SK-N-SH (cell line): ENCODE measurements at regions of chr14 and their contacts with region 1.

Region 1: GRCh38 chr14:75982266-75983018 is 647 bp upstream of the TGFB3 start:
- DNase-seq: peak; percentile 90
- H3K4me3 ChIP-seq: peak overlapping the region; percentile 75 to 95
- H3K27ac ChIP-seq: peak overlapping the region; percentile 64 to 86
- H3K4me1 ChIP-seq: peaks cover 18 to 53% of the 10 kb centered on the region in 2 experiments
- H3K27me3 ChIP-seq: no peaks in the 10 kb centered on the region
- CTCF ChIP-seq: peak; percentile 57
- EP300 ChIP-seq: no peak
- RAD21 ChIP-seq: peak; percentile 81

Region 2: DNA sequence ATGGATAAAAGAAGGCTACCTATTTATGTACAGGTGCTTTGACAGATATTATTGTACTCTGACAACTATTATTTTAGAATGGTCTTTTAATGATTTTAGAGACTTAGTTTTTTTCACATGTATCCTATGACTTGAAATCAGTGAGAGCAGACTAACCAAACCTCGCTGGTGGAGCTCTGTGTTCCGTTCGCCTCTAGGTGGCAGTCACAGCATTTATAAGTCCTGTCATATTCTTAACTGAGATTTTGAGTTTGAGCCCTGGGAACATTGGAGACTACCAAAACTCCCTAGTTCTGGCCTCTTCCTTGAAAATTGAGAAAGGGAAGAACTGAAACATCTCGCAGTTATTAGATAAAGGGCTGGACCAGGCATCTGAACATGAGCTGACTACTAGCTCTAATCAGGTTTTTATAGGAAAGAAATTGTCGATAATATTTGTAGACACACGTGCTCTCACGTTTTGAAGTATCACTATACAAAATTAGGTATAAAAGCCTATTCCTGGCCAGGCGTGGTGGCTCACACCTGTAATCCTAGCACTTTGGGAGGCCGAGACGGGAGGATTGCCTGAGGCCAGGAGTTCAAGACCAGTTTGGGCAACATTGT is 273.1 kb before region 1 on chr14:
- CTCF ChIA-PET with region 1: interaction called, 270 read pairs
- POLR2A ChIA-PET with region 1: interaction called, 5 read pairs
- DNase-seq: peak; percentile 52
- H3K4me3 ChIP-seq: no peak overlapping the region; a peak in 1 of 4 replicates
- H3K27ac ChIP-seq: no peak overlapping the region
- H3K4me1 ChIP-seq: peaks cover 6 to 11% of the 10 kb centered on the region in 2 experiments; a peak in 3 of 4 replicates
- H3K27me3 ChIP-seq: no peaks in the 10 kb centered on the region
- CTCF ChIP-seq: peak; percentile 90
- EP300 ChIP-seq: no peak
- RAD21 ChIP-seq: peak; percentile 85

Region 3: GRCh38 chr14:75794615-75795038 is 187.8 kb before region 1 on chr14:
- CTCF ChIA-PET with region 1: interaction called, 16 read pairs
- POLR2A ChIA-PET with region 1: no interaction called
- DNase-seq: peak; percentile 7
- H3K4me3 ChIP-seq: no peak overlapping the region; a peak in 1 of 4 replicates
- H3K27ac ChIP-seq: peak overlapping the region in 1 of 2 experiments; percentile 30; a peak in 2 of 4 replicates
- H3K4me1 ChIP-seq: no peaks in the 10 kb centered on the region; a peak in 1 of 4 replicates
- H3K27me3 ChIP-seq: no peaks in the 10 kb centered on the region
- CTCF ChIP-seq: peak; percentile 64
- EP300 ChIP-seq: no peak
- RAD21 ChIP-seq: peak; percentile 70

Region 4: DNA sequence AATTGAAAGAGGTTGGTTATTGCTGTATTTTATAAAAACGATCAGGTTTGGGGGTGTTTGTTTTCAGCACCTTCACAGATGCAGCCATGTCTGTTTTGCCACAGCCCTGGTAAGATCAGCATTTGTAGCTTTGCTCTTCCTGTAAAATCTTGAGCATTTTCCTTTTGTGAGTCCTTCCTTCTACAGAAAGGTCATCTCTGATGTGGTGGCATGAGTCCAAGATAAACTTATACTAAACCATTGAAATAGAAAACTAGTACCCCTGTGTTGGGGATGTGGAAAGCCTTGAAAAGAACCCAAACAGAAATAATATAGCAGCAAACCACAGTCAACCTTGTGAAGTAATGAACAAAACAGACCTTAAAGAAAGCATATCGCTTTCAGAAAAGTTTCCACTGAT is 86.1 kb before region 1 on chr14:
- CTCF ChIA-PET with region 1: interaction called, 550 read pairs
- POLR2A ChIA-PET with region 1: no interaction called
- DNase-seq: no peak
- H3K4me3 ChIP-seq: no peak overlapping the region
- H3K27ac ChIP-seq: no peak overlapping the region; a peak in 1 of 4 replicates
- H3K4me1 ChIP-seq: no peaks in the 10 kb centered on the region
- H3K27me3 ChIP-seq: no peaks in the 10 kb centered on the region
- CTCF ChIP-seq: no peak
- EP300 ChIP-seq: no peak
- RAD21 ChIP-seq: no peak

Region 5: DNA sequence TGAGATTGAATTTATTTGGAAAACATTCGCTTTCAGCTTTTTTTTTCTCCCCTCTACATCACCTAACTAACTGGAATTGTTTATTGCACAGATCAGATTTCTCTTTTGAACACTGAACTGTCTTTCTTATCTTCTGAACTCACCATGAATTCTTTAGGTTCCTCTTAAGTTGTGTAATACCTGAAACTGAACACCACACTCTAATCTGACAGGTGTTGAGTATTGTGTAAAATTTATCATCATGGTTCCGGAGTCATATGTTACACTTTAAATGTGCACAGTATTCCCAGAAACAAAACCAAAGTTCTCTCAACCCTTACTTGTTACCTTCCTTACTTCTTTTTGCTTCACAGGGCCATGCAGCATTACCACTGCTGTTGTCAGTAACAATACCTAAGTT is 67.4 kb before region 1 on chr14:
- CTCF ChIA-PET with region 1: interaction called, 550 read pairs
- POLR2A ChIA-PET with region 1: no interaction called
- DNase-seq: no peak
- H3K4me3 ChIP-seq: no peak overlapping the region
- H3K27ac ChIP-seq: no peak overlapping the region
- H3K4me1 ChIP-seq: peaks cover 0 to 23% of the 10 kb centered on the region in 2 experiments; a peak in 2 of 4 replicates
- H3K27me3 ChIP-seq: no peaks in the 10 kb centered on the region
- CTCF ChIP-seq: no peak
- EP300 ChIP-seq: no peak
- RAD21 ChIP-seq: no peak

Region 6: GRCh38 chr14:75968456-75968855 is 14.0 kb before region 1 on chr14:
- CTCF ChIA-PET with region 1: interaction called, 57 read pairs
- POLR2A ChIA-PET with region 1: no interaction called
- DNase-seq: no peak
- H3K4me3 ChIP-seq: no peak overlapping the region
- H3K27ac ChIP-seq: no peak overlapping the region
- H3K4me1 ChIP-seq: peaks cover 0 to 29% of the 10 kb centered on the region in 2 experiments; a peak in 2 of 4 replicates
- H3K27me3 ChIP-seq: no peaks in the 10 kb centered on the region
- CTCF ChIP-seq: no peak
- EP300 ChIP-seq: no peak
- RAD21 ChIP-seq: no peak

Region 7: DNA sequence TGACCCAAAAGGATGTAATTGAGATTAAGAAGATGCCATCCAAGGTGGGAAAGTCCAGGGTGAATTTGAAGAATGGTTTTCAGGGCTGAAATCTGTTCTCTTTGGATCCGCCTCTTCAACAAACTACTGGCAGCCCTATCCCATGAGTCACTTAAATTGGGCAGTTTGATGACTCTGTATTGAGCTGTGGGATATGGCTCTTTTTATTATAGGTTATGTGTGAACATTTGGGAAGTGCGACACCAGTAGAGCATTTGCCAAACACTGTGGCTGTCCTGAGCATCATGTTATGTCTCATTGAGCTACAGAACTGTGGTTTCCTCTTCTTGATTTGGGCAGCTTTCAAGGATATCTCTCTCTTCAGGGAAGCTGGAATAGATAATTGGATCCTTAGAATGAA is 25.4 kb after region 1 on chr14:
- CTCF ChIA-PET with region 1: interaction called, 10 read pairs
- POLR2A ChIA-PET with region 1: no interaction called
- DNase-seq: no peak
- H3K4me3 ChIP-seq: no peak overlapping the region
- H3K27ac ChIP-seq: no peak overlapping the region
- H3K4me1 ChIP-seq: no peaks in the 10 kb centered on the region
- H3K27me3 ChIP-seq: no peaks in the 10 kb centered on the region
- CTCF ChIP-seq: no peak
- EP300 ChIP-seq: no peak
- RAD21 ChIP-seq: no peak

Region 8: GRCh38 chr14:76102011-76102379 is 119.6 kb after region 1 on chr14:
- CTCF ChIA-PET with region 1: no interaction called
- POLR2A ChIA-PET with region 1: no interaction called
- DNase-seq: no peak
- H3K4me3 ChIP-seq: no peak overlapping the region
- H3K27ac ChIP-seq: no peak overlapping the region
- H3K4me1 ChIP-seq: peaks cover 0 to 11% of the 10 kb centered on the region in 2 experiments; a peak in 1 of 4 replicates
- H3K27me3 ChIP-seq: no peaks in the 10 kb centered on the region; the same call in 1 of the 2 replicates
- CTCF ChIP-seq: no peak
- EP300 ChIP-seq: no peak
- RAD21 ChIP-seq: peak; percentile 48; the same call in 1 of the 2 replicates